BJ (cell line): ENCODE measurements at regions of chr3 and their contacts with region 1.

Region 1: GRCh38 chr3:48157950-48158376 is 30.3 kb downstream of the CDC25A start:
- DNase-seq: no peak
- H3K4me3 ChIP-seq: no peak overlapping the region
- H3K27me3 ChIP-seq: no peaks in the 10 kb centered on the region
- CTCF ChIP-seq: peak; percentile 84

Region 2: DNA sequence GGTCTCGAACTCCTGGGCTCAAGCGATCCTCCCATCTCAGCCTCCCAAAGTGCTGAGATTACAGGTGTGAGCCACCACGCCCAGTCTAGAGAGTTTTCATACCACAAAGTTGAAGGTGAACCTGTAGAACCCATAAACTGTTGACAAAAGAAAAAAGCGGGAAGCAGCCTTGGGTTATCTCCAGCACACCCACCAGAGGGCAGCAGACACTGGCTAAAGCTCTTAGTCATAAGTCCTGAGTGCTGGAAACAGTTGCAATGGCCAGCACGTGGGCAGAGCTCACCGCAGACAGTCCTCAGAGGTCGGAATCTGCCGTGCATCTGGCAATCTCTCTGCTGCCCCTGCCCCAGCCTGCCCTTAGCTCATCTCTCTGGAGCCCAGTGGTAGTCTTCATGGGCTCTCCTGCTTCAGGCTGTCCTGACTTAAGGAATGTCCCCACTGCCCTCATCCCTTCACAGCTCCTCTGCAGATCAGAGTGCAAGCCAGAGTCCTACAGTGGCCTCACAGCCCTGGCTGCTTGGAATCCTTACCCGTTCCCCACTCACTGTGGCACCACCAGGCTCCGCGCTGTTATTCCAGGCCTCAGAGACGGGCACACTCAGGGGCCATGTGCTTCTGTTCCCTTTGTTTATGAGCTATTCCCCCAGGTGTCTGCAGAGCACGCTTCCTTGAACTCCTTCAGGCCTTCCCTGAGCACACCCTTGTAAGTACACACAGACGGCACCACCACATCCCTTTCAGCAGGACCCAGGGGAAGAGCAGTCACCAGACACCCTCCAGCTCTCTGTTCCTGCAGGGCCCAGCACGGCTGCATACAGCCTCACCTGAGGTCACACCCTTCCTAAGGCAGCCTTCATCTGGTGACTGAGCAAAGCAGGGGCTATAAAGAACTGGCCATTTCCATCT is 635.6 kb before region 1 on chr3:
- CTCF ChIA-PET with region 1: interaction called, 12 read pairs
- POLR2A ChIA-PET with region 1: no interaction called
- DNase-seq: peak; percentile 41
- H3K4me3 ChIP-seq: no peak overlapping the region
- H3K27me3 ChIP-seq: no peaks in the 10 kb centered on the region
- CTCF ChIP-seq: peak; percentile 84

Region 3: GRCh38 chr3:47824541-47825473 is 333.2 kb before region 1 on chr3:
- CTCF ChIA-PET with region 1: interaction called, 22 read pairs
- POLR2A ChIA-PET with region 1: no interaction called
- DNase-seq: peak; percentile 41
- H3K4me3 ChIP-seq: peak overlapping the region; percentile 94
- H3K27me3 ChIP-seq: no peaks in the 10 kb centered on the region
- CTCF ChIP-seq: peak; percentile 53

Region 4: DNA sequence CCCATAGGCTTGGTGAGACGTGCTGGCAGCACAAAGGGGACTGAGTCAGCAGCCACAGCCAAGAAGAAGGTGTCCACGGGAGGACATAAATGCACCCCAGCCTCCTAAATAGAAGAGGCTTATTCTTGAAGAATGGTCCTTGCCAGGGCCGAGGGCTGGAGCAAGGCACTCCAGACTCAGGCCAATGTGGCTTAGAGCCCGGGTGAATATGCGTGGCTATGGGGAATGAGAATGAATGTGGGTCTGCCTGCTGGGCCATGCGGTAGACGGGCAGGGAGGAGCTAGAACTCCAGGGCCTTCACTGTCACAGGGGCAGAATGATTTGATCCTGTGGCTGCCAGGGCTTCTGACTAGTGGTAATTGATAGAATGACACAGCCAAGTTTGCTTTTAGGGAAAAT is 321.0 kb before region 1 on chr3:
- CTCF ChIA-PET with region 1: interaction called, 35 read pairs
- POLR2A ChIA-PET with region 1: no interaction called
- DNase-seq: no peak
- H3K4me3 ChIP-seq: no peak overlapping the region
- H3K27me3 ChIP-seq: no peaks in the 10 kb centered on the region
- CTCF ChIP-seq: no peak

Region 5: GRCh38 chr3:47849699-47850563 is 308.0 kb before region 1 on chr3:
- CTCF ChIA-PET with region 1: interaction called, 19 read pairs
- POLR2A ChIA-PET with region 1: no interaction called
- DNase-seq: no peak
- H3K4me3 ChIP-seq: no peak overlapping the region
- H3K27me3 ChIP-seq: no peaks in the 10 kb centered on the region
- CTCF ChIP-seq: peak; percentile 65

Region 6: GRCh38 chr3:47961815-47962618 is 195.9 kb before region 1 on chr3:
- CTCF ChIA-PET with region 1: no interaction called
- POLR2A ChIA-PET with region 1: no interaction called
- DNase-seq: peak; percentile 23
- H3K4me3 ChIP-seq: no peak overlapping the region
- H3K27me3 ChIP-seq: no peaks in the 10 kb centered on the region
- CTCF ChIP-seq: no peak

Region 7: GRCh38 chr3:48194446-48195071 is 36.6 kb after region 1 on chr3:
- CTCF ChIA-PET with region 1: interaction called, 4 read pairs
- POLR2A ChIA-PET with region 1: interaction called, 19 read pairs
- DNase-seq: no peak
- H3K4me3 ChIP-seq: no peak overlapping the region
- H3K27me3 ChIP-seq: no peaks in the 10 kb centered on the region
- CTCF ChIP-seq: peak; percentile 84

Region 8: DNA sequence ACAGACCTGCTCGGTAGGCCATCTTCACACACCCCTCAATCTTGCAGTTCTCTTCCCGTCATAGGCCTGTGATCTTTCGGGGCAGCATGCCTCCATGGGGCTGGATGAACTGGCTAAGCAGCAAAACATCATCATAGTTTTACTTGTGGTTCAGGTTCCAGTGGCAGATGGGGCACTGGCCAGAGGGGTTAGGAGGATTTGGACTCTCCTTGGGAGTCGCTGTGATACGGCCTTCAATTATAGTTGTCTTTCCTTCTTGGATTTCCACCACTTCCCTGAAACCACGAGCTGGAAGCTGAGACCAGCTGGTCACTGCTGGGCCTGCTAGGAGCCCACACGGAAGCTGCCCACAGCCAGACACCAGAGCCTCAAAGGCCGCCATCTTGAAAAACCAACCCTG is 98.6 kb after region 1 on chr3:
- CTCF ChIA-PET with region 1: no interaction called
- POLR2A ChIA-PET with region 1: no interaction called
- DNase-seq: no peak
- H3K4me3 ChIP-seq: no peak overlapping the region
- H3K27me3 ChIP-seq: no peaks in the 10 kb centered on the region
- CTCF ChIP-seq: no peak